Naive thymus-derived CD4-positive, alpha-beta T cell (primary cell): ENCODE measurements at regions of chr6 and their contacts with region 1.

Region 1: DNA sequence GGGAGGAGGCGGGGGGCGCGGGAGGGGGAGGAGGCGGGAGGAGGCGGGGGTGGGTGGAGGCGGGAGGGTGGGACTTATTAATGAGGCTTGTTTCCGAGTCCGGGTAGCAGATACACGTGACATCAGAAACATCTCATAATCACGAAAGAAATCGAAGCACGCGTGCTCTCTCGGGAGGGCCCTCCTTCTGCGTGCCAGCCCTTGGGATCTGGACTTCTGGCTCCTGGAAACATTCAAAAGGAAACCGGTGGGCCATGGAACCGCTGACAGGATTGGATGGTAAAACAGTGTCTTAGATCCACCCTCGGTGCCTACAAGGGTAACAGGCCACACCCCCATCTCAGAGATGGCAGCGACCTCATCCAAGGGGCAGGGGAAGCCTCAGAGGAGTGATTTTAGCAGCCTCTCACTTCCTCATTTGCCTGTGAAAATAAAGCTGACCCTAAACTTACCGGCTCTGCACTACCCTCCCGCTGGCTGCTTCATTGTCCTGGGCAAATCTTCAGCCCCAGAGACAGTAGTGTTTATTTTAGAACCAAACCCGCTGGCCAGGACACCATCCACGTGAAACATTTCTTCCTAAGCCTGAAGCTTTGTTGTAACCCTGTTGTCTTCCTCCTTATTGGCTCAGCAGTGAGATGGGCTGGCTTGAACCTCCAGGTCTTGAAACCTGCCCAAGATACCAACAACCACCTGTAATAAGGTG is 97.5 kb downstream of the PSMG4 start:
- DNase-seq: peak in 8 of 9 donors; percentile 31 to 86 (median 78)
- ATAC-seq: peak; percentile 89
- H3K4me3 ChIP-seq: peak overlapping the region; percentile 65
- H3K4me3 Mint-ChIP-seq: peak overlapping the region; percentile 76 to 99 (median 88)
- H3K27ac ChIP-seq: peak overlapping the region; percentile 78
- H3K27ac Mint-ChIP-seq: peak overlapping the region in 8 of 9 donors; percentile 92 to 100 (median 98)
- H3K4me1 ChIP-seq: peaks cover 7 to 27% of the 10 kb centered on the region in 2 donors
- H3K4me1 Mint-ChIP-seq: peaks cover 14 to 79% (median 58%) of the 10 kb centered on the region in 7 donors
- H3K27me3 ChIP-seq: no peaks in the 10 kb centered on the region
- H3K27me3 Mint-ChIP-seq: peaks cover 0 to 43% (median 0%) of the 10 kb centered on the region in 5 donors

Region 2: GRCh38 chr6:2028457-2029038 is 1327.7 kb before region 1 on chr6:
- CTCF ChIA-PET with region 1: no interaction called
- POLR2A ChIA-PET with region 1: no interaction called
- intact Hi-C with region 1: no loop called
- DNase-seq: no peak
- ATAC-seq: peak; percentile 51
- H3K4me3 ChIP-seq: no peak overlapping the region
- H3K4me3 Mint-ChIP-seq: peak overlapping the region in 1 of 10 donors; percentile 18
- H3K27ac ChIP-seq: no peak overlapping the region
- H3K27ac Mint-ChIP-seq: no peak overlapping the region
- H3K4me1 ChIP-seq: peaks cover 0 to 9% of the 10 kb centered on the region in 2 donors
- H3K4me1 Mint-ChIP-seq: peaks cover 7 to 33% (median 21%) of the 10 kb centered on the region in 7 donors
- H3K27me3 ChIP-seq: no peaks in the 10 kb centered on the region
- H3K27me3 Mint-ChIP-seq: peaks cover 0 to 3% (median 0%) of the 10 kb centered on the region in 5 donors

Region 3: DNA sequence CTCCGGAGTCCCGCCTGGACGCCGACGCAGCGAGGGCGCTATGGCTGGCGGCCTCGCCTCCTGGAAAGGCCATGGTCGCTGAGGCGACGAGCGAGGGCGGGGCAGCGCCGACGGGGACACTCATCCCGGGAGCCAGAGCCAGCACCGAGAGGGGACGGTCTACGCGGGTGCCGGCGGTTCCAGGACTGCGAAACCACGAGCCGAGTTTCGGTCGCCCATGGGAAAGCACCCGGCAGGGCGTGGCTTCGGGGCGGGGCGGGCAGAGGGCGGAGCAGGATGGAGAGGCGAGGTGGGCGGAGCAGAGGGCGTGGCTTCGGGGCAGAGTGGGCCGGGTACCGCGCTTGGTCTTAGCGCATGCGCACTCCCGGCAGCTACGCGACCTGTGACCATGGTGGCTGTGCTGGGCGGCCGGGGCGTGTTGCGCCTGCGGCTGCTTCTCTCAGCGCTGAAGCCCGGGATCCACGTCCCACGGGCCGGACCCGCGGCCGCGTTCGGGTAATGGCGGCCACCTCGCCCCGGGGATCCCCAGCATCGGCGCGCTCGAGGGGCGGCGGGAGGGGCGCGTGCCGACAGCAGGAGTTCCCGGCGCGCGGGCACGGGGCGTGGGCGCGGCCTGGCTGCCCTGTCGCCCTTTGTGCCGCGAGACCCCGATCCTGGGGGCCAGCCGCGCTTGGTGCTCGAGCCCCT is 237.7 kb before region 1 on chr6 and contains the start of gene BPHL:
- CTCF ChIA-PET with region 1: no interaction called
- POLR2A ChIA-PET with region 1: no interaction called
- intact Hi-C with region 1: loop called in 1 of 2 experiments (anchors 1 kb)
- DNase-seq: peak; percentile 97 to 100 (median 99)
- ATAC-seq: peak; percentile 99
- H3K4me3 ChIP-seq: peak within 1 kb of the TSS; percentile 91
- H3K4me3 Mint-ChIP-seq: peak within 1 kb of the TSS; percentile 77 to 93 (median 90)
- H3K27ac ChIP-seq: peak within 1 kb of the TSS; percentile 97
- H3K27ac Mint-ChIP-seq: peak within 1 kb of the TSS; percentile 82 to 97 (median 95)
- H3K4me1 ChIP-seq: peaks cover 0 to 4% of the 10 kb centered on the region in 2 donors
- H3K4me1 Mint-ChIP-seq: peaks cover 12 to 19% (median 18%) of the 10 kb centered on the region in 7 donors
- H3K27me3 ChIP-seq: no peaks in the 10 kb centered on the region
- H3K27me3 Mint-ChIP-seq: peaks cover 0 to 5% (median 0%) of the 10 kb centered on the region in 5 donors
- total RNA-seq, gene BPHL: 7.9 to 18.0 (median 10.0) TPM

Region 4: GRCh38 chr6:3157131-3157927 is 198.9 kb before region 1 on chr6 and contains the start of gene TUBB2A:
- CTCF ChIA-PET with region 1: no interaction called
- POLR2A ChIA-PET with region 1: no interaction called
- intact Hi-C with region 1: loop called in 1 of 2 experiments (anchors 2 kb)
- DNase-seq: peak; percentile 83 to 96 (median 90)
- ATAC-seq: peak; percentile 87
- H3K4me3 ChIP-seq: peak within 1 kb of the TSS; percentile 61
- H3K4me3 Mint-ChIP-seq: peak within 1 kb of the TSS; percentile 81 to 94 (median 92)
- H3K27ac ChIP-seq: peak within 1 kb of the TSS; percentile 86
- H3K27ac Mint-ChIP-seq: peak within 1 kb of the TSS; percentile 75 to 96 (median 93)
- H3K4me1 ChIP-seq: peaks cover 15 to 17% of the 10 kb centered on the region in 2 donors
- H3K4me1 Mint-ChIP-seq: peaks cover 4 to 37% (median 33%) of the 10 kb centered on the region in 7 donors
- H3K27me3 ChIP-seq: no peaks in the 10 kb centered on the region
- H3K27me3 Mint-ChIP-seq: peaks cover 0 to 52% (median 4%) of the 10 kb centered on the region in 5 donors
- total RNA-seq, gene TUBB2A: 2.2 to 39.6 (median 3.1) TPM

Region 5: GRCh38 chr6:3281631-3282475 is 74.4 kb before region 1 on chr6:
- CTCF ChIA-PET with region 1: no interaction called
- POLR2A ChIA-PET with region 1: interaction called, 7 read pairs
- intact Hi-C with region 1: loop called in 1 of 2 experiments (anchors 5 kb)
- DNase-seq: no peak
- ATAC-seq: no peak
- H3K4me3 ChIP-seq: no peak overlapping the region
- H3K4me3 Mint-ChIP-seq: no peak overlapping the region
- H3K27ac ChIP-seq: no peak overlapping the region
- H3K27ac Mint-ChIP-seq: no peak overlapping the region
- H3K4me1 ChIP-seq: peaks cover 0 to 5% of the 10 kb centered on the region in 2 donors
- H3K4me1 Mint-ChIP-seq: peaks cover 0 to 6% (median 4%) of the 10 kb centered on the region in 7 donors
- H3K27me3 ChIP-seq: no peaks in the 10 kb centered on the region
- H3K27me3 Mint-ChIP-seq: no peaks in the 10 kb centered on the region

Region 6: GRCh38 chr6:3410385-3411360 is 54.5 kb after region 1 on chr6:
- CTCF ChIA-PET with region 1: interaction called, 6 read pairs
- POLR2A ChIA-PET with region 1: no interaction called
- intact Hi-C with region 1: loop called in 1 of 2 experiments (anchors 2 kb)
- DNase-seq: peak; percentile 30 to 72 (median 60)
- ATAC-seq: peak; percentile 78
- H3K4me3 ChIP-seq: no peak overlapping the region
- H3K4me3 Mint-ChIP-seq: no peak overlapping the region
- H3K27ac ChIP-seq: no peak overlapping the region
- H3K27ac Mint-ChIP-seq: peak overlapping the region in 6 of 9 donors; percentile 34 to 84 (median 66)
- H3K4me1 ChIP-seq: peaks cover 0 to 11% of the 10 kb centered on the region in 2 donors
- H3K4me1 Mint-ChIP-seq: peaks cover 2 to 28% (median 20%) of the 10 kb centered on the region in 7 donors
- H3K27me3 ChIP-seq: no peaks in the 10 kb centered on the region
- H3K27me3 Mint-ChIP-seq: peaks cover 0 to 4% (median 0%) of the 10 kb centered on the region in 5 donors

Region 7: GRCh38 chr6:3438190-3439167 is 82.3 kb after region 1 on chr6:
- CTCF ChIA-PET with region 1: no interaction called
- POLR2A ChIA-PET with region 1: no interaction called
- intact Hi-C with region 1: no loop called
- DNase-seq: no peak
- ATAC-seq: no peak
- H3K4me3 ChIP-seq: no peak overlapping the region
- H3K4me3 Mint-ChIP-seq: no peak overlapping the region
- H3K27ac ChIP-seq: no peak overlapping the region
- H3K27ac Mint-ChIP-seq: peak overlapping the region in 1 of 9 donors; percentile 36
- H3K4me1 ChIP-seq: no peaks in the 10 kb centered on the region
- H3K4me1 Mint-ChIP-seq: peaks cover 0 to 39% (median 7%) of the 10 kb centered on the region in 7 donors
- H3K27me3 ChIP-seq: no peaks in the 10 kb centered on the region
- H3K27me3 Mint-ChIP-seq: peaks cover 0 to 2% (median 0%) of the 10 kb centered on the region in 5 donors

Region 8: GRCh38 chr6:4775584-4776494 is 1419.6 kb after region 1 on chr6 and contains the start of gene CDYL:
- CTCF ChIA-PET with region 1: no interaction called
- POLR2A ChIA-PET with region 1: no interaction called
- intact Hi-C with region 1: loop called in 1 of 2 experiments (anchors 5 kb)
- DNase-seq: peak; percentile 75 to 94 (median 88)
- ATAC-seq: peak; percentile 89
- H3K4me3 ChIP-seq: peak within 1 kb of the TSS; percentile 58
- H3K4me3 Mint-ChIP-seq: peak within 1 kb of the TSS; percentile 84 to 96 (median 93)
- H3K27ac ChIP-seq: peak within 1 kb of the TSS; percentile 63
- H3K27ac Mint-ChIP-seq: peak within 1 kb of the TSS; percentile 61 to 94 (median 87)
- H3K4me1 ChIP-seq: peaks cover 0 to 10% of the 10 kb centered on the region in 2 donors
- H3K4me1 Mint-ChIP-seq: peaks cover 32 to 48% (median 46%) of the 10 kb centered on the region in 7 donors
- H3K27me3 ChIP-seq: no peaks in the 10 kb centered on the region
- H3K27me3 Mint-ChIP-seq: peaks cover 0 to 38% (median 0%) of the 10 kb centered on the region in 5 donors
- total RNA-seq, gene CDYL: 25.5 to 43.3 (median 35.1) TPM